Esophagus muscularis mucosa (tissue), 4 donors: ENCODE measurements at regions of chr10 and their contacts with region 1.

Region 1: DNA sequence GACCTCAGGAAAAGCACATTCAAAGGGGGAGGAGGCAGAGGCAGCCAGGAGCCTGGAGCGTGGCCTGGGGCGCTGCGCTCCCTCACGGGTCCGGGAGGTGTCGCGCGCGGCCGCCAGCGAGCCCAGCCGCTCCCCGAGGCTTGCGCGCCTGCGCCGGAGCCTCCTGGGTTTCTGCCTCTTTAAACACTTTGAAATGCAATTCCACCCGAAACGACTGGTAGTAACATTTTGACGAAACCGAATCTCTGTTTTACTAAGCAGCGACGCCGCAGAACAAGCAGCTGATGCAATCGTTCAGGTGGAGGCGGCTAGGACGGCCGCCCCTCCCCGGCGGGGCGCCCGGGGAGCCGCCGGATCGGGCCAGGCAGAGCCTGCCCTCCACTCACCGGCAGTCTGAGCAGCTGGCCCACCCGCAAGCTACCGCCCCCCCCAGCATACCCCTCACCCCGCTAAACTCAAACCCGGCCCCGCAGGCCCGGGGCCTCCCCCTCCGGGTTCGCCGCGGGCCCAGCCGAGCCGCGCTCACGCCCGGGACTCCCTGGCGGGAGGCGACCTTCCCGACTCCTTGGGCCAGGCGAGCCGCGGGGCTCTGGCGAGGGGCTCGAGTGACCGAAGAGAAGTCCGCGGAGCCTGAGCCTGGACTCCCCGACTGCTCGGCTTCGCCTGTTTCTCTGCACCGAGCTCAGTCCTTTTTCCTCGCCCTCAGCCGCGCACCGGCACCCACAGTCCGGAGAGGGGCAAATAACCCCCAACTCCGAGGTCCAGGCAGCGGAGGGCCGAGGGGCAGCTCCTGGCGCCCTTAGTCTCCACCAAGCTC is 3.2 kb downstream of the MKX start:
- DNase-seq: no peak
- H3K4me3 ChIP-seq: peak overlapping the region; percentile 62 to 90 (median 71)
- H3K27ac ChIP-seq: peak overlapping the region; percentile 91 to 99 (median 94)
- H3K4me1 ChIP-seq: peaks cover 39 to 70% (median 58%) of the 10 kb centered on the region in 4 donors
- H3K27me3 ChIP-seq: peaks cover 3 to 61% (median 10%) of the 10 kb centered on the region in 4 donors
- CTCF ChIP-seq: peak; percentile 87 to 96 (median 90)
- EP300 ChIP-seq: no peak
- POLR2A ChIP-seq: no peak

Region 2: GRCh38 chr10:27558612-27559020 is 183.8 kb before region 1 on chr10:
- intact Hi-C with region 1: loop called (anchors 5 kb)
- DNase-seq: no peak
- H3K4me3 ChIP-seq: no peak overlapping the region
- H3K27ac ChIP-seq: no peak overlapping the region
- H3K4me1 ChIP-seq: peaks cover 0 to 6% (median 2%) of the 10 kb centered on the region in 4 donors
- H3K27me3 ChIP-seq: no peaks in the 10 kb centered on the region
- CTCF ChIP-seq: peak; percentile 66 to 79 (median 75)
- EP300 ChIP-seq: no peak
- POLR2A ChIP-seq: no peak

Region 3: GRCh38 chr10:27794157-27794556 is 51.8 kb after region 1 on chr10:
- intact Hi-C with region 1: loop called (anchors 2 kb)
- DNase-seq: no peak
- H3K4me3 ChIP-seq: no peak overlapping the region
- H3K27ac ChIP-seq: no peak overlapping the region
- H3K4me1 ChIP-seq: no peaks in the 10 kb centered on the region
- H3K27me3 ChIP-seq: no peaks in the 10 kb centered on the region
- CTCF ChIP-seq: peak; percentile 42 to 60 (median 45)
- EP300 ChIP-seq: no peak
- POLR2A ChIP-seq: no peak

Region 4: GRCh38 chr10:27838361-27838760 is 96.0 kb after region 1 on chr10:
- intact Hi-C with region 1: no loop called
- DNase-seq: no peak
- H3K4me3 ChIP-seq: no peak overlapping the region
- H3K27ac ChIP-seq: no peak overlapping the region
- H3K4me1 ChIP-seq: peaks cover 0 to 13% (median 10%) of the 10 kb centered on the region in 4 donors
- H3K27me3 ChIP-seq: no peaks in the 10 kb centered on the region
- CTCF ChIP-seq: no peak
- EP300 ChIP-seq: no peak
- POLR2A ChIP-seq: no peak

Region 5: DNA sequence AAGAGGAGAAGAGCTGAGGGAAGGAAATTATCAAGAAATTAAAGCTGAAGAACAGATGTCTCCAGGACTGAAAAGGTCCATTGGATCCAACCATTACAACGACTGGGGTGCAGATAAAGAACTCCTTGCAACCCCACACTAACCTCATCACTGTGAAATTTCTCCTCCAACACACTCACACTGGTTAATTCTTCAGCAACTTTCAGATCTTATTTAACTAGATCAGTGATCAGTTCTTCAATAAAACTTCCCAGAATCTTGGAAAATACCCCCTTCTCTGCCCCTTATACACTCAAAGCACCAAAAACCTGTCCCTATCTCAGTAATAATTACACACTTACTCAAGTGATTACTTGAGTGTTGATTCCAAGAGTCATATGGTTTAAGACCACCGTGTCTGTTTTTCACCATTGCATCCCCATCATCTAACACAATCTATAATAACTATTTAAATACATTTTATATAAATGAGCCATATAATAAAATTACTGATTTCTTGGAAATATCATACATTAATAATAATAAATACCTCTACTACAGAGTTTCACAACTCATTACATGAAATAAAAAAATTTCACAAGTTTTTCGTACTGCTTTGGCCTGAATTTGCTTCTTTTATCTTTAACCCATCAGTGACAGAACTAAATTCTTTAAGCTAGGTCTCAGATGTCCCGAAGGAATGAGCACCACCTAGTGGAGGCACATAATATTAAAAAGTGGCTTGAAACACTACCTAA is 436.8 kb after region 1 on chr10:
- intact Hi-C with region 1: loop called (anchors 5 kb)
- DNase-seq: no peak
- H3K4me3 ChIP-seq: peak overlapping the region in 2 of 4 donors; percentile 31 to 41
- H3K27ac ChIP-seq: peak overlapping the region in 3 of 4 donors; percentile 61 to 70 (median 68)
- H3K4me1 ChIP-seq: peaks cover 2 to 44% (median 37%) of the 10 kb centered on the region in 4 donors
- H3K27me3 ChIP-seq: no peaks in the 10 kb centered on the region
- CTCF ChIP-seq: peak; percentile 63 to 80 (median 74)
- EP300 ChIP-seq: no peak
- POLR2A ChIP-seq: no peak

Region 6: DNA sequence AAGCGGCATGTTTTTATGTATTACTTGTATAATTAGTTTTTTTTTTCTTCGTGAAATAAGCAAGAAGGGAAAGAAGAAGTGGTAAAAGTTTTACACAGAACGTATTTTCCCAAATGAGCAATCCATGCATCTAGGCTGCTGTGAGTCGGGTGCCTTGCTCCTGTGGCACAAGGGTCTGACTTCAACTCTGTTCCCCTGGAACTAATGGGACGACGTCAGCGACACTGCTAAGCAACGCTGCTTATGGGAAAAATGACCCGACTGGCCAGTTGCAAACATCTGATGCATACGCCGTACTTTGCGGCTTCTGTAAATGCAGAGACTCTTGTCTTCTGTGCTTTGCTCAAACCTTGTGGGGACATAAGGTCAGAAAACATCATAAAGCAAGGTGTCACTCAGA is 494.2 kb after region 1 on chr10:
- intact Hi-C with region 1: loop called (anchors 5 kb)
- DNase-seq: no peak
- H3K4me3 ChIP-seq: no peak overlapping the region
- H3K27ac ChIP-seq: no peak overlapping the region
- H3K4me1 ChIP-seq: peaks cover 0 to 7% (median 6%) of the 10 kb centered on the region in 4 donors
- H3K27me3 ChIP-seq: no peaks in the 10 kb centered on the region
- CTCF ChIP-seq: no peak
- EP300 ChIP-seq: no peak
- POLR2A ChIP-seq: no peak

Region 7: DNA sequence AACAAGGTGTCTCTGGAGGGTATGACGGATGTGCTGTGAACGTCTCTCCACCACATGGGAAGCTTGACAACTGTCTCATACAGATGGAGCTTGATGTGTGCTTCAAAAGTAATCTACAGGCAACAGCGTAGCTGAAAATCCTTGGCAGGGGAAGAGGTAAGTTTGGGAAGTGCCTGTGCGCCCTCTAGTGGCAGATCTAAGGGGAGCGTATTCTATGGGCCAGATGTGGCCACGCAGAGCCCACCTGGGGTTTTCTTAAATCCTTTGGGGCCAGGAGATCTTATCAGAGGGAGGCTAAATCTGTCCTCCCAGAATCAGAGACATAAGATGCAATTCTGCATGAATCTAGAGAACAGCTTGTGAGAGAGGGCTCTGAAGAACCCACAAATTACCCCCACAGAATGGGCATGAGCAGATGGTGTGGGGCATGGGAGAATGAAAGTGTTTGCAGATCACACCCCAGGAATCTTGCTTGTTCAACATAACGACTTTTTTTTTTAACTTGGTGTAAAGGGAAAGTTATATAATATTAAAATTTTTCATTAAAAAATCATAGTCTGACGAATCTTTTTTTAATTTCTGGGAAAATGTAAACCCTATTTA is 651.7 kb after region 1 on chr10:
- intact Hi-C with region 1: loop called (anchors 10 kb)
- DNase-seq: no peak
- H3K4me3 ChIP-seq: no peak overlapping the region
- H3K27ac ChIP-seq: no peak overlapping the region
- H3K4me1 ChIP-seq: peaks cover 0 to 6% (median 6%) of the 10 kb centered on the region in 4 donors
- H3K27me3 ChIP-seq: no peaks in the 10 kb centered on the region
- CTCF ChIP-seq: peak; percentile 76 to 97 (median 79)
- EP300 ChIP-seq: no peak
- POLR2A ChIP-seq: no peak